ENCODE measurements at regions of chr22 and their contacts with region 1.

Region 1: DNA sequence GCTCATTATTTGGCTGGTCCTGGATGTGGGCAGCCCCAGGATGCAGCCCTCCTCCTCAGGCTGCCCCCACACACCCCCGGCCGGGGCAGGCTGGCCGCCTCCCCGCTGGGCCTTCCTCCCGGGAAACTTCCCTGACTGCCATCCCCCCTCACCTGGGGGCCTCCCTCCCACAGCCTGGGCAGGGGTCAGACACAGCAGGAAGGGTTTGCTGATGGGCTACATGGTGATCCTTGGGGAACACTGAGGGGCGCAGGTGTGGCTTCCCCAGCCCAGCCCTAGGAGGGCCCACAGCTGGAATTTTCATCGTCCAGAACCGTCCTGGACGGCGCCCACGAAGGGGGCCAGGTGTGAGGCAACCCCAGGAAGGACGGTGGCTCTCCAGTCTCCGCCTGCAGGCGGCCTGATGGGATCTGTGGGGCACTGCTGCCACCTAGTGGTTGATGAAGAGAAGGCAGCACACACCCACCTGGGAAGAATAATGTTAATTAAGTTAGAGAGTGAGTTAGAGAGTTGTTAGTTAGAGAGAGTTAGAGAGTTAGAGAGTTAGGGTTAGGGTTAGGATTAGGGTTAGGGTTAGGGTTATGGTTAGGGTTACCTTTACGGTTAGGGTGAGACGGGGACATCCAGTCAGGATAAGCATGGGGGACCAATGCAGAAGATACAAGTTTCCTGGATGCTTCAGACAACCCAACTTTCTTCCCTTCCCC is 75.9 kb upstream of the PRR5 start:
- DNase-seq: no peak
- ATAC-seq: peak; percentile 66

Region 2: GRCh38 chr22:44337678-44338004 is 288.5 kb before region 1 on chr22:
- intact Hi-C with region 1: loop called (anchors 10 kb)
- DNase-seq: no peak
- ATAC-seq: no peak

Region 3: GRCh38 chr22:44729391-44730021 is 103.4 kb after region 1 on chr22:
- intact Hi-C with region 1: no loop called
- DNase-seq: peak; percentile 79
- ATAC-seq: peak; percentile 84

Measured in Right ventricle myocardium inferior (tissue), 1 donor.